GM12878 (cell line): ENCODE measurements at regions of chr4 and their contacts with region 1.

Region 1: GRCh38 chr4:40897557-40898203 is 147.9 kb downstream of the NSUN7 start:
- DNase-seq: no peak
- ATAC-seq: peak; percentile 95
- H3K4me3 ChIP-seq: 0 out of 2 replicates have a peak overlapping the region, but pooled peaks have one; percentile 34
- H3K27ac ChIP-seq: no peak overlapping the region
- H3K4me1 ChIP-seq: no peaks in the 10 kb centered on the region
- H3K27me3 ChIP-seq: no peaks in the 10 kb centered on the region
- CTCF ChIP-seq: peak; percentile 74 to 89 (median 82)
- EP300 ChIP-seq: no peak
- POLR2A ChIP-seq: no peak
- RAD21 ChIP-seq: peak; percentile 68

Region 2: DNA sequence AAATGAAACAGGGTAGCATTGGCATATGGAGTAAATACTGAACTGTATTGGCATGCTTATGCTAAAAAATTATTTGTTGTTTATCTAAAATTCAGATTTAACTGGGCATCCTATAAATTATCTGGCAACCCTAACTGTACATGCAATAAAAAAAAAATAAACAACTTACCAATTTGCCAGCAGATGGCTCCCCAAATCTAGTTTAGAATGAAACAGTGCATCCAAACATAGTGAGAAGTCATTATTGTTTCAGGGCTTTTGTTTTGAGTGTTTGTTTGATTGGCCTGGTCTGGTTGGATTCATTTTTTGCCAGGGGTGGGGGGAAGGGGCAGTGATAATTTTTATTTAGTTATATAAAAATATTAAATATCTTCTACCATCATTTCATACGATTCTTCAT is 160.8 kb before region 1 on chr4:
- CTCF ChIA-PET with region 1: interaction called, 140 read pairs
- POLR2A ChIA-PET with region 1: interaction called, 3 read pairs
- RAD21 ChIA-PET with region 1: interaction called, 9 read pairs
- SMC1A ChIA-PET with region 1: interaction called, 38 read pairs
- in situ Hi-C with region 1: loop called (anchors 5 kb)
- intact Hi-C with region 1: loop called (anchors 1 kb)
- DNase-seq: no peak
- ATAC-seq: peak; percentile 84
- H3K4me3 ChIP-seq: no peak overlapping the region
- H3K27ac ChIP-seq: no peak overlapping the region
- H3K4me1 ChIP-seq: no peaks in the 10 kb centered on the region
- H3K27me3 ChIP-seq: no peaks in the 10 kb centered on the region
- CTCF ChIP-seq: peak; percentile 43 to 68 (median 47); a peak in 5 of 6 replicates
- EP300 ChIP-seq: no peak
- POLR2A ChIP-seq: no peak
- RAD21 ChIP-seq: peak; percentile 94

Region 3: GRCh38 chr4:40881096-40881495 is 16.6 kb before region 1 on chr4:
- CTCF ChIA-PET with region 1: interaction called, 23 read pairs
- POLR2A ChIA-PET with region 1: no interaction called
- RAD21 ChIA-PET with region 1: interaction called, 8 read pairs
- SMC1A ChIA-PET with region 1: interaction called, 4 read pairs
- in situ Hi-C with region 1: no loop called
- intact Hi-C with region 1: no loop called
- DNase-seq: no peak
- ATAC-seq: no peak
- H3K4me3 ChIP-seq: no peak overlapping the region
- H3K27ac ChIP-seq: no peak overlapping the region
- H3K4me1 ChIP-seq: no peaks in the 10 kb centered on the region
- H3K27me3 ChIP-seq: no peaks in the 10 kb centered on the region
- CTCF ChIP-seq: no peak
- EP300 ChIP-seq: no peak
- POLR2A ChIP-seq: no peak
- RAD21 ChIP-seq: no peak

Region 4: DNA sequence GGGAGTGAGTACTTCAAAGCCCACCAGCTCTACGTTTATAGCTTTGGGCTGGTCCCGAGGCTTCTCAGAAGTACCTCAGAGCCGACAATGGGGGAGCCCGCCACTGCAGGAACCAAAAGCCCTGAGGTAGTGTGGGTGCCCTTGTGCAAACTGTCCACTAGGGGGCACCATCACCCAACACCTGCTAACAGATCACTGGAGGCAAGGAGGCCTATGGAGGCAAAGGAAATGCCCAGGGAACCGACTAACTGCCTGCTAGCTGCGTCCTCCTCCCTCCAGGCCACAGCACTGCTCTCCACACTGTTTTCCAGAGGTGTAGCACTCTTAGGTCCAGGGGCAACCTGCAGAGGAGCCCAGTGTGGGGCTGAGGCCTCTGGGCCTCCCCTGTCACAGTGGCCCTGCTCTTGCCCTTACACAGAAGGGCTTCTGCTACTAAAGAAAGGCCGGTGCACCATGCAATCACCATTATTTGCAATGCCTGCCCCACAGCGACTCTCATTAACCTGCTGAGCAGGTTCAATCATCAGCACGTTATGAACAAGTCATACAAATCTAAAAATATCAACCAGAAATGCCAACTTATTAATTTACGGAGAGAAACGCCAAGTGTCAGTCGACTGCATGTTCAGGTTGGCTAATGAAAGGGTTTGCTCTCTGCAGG is 11.2 kb after region 1 on chr4:
- CTCF ChIA-PET with region 1: interaction called, 39 read pairs
- POLR2A ChIA-PET with region 1: no interaction called
- RAD21 ChIA-PET with region 1: interaction called, 3 read pairs
- SMC1A ChIA-PET with region 1: interaction called, 5 read pairs
- in situ Hi-C with region 1: no loop called
- intact Hi-C with region 1: no loop called
- DNase-seq: peak; percentile 40
- ATAC-seq: peak; percentile 99
- H3K4me3 ChIP-seq: no peak overlapping the region
- H3K27ac ChIP-seq: no peak overlapping the region
- H3K4me1 ChIP-seq: peaks cover 4% of the 10 kb centered on the region; the same call in 1 of the 2 replicates
- H3K27me3 ChIP-seq: no peaks in the 10 kb centered on the region
- CTCF ChIP-seq: peak; percentile 92 to 97 (median 93)
- EP300 ChIP-seq: no peak
- POLR2A ChIP-seq: no peak
- RAD21 ChIP-seq: peak; percentile 82

Region 5: GRCh38 chr4:41024556-41025491 is 127.1 kb after region 1 on chr4:
- CTCF ChIA-PET with region 1: no interaction called
- POLR2A ChIA-PET with region 1: no interaction called
- RAD21 ChIA-PET with region 1: no interaction called
- SMC1A ChIA-PET with region 1: no interaction called
- in situ Hi-C with region 1: no loop called
- intact Hi-C with region 1: no loop called
- DNase-seq: no peak
- ATAC-seq: no peak
- H3K4me3 ChIP-seq: no peak overlapping the region
- H3K27ac ChIP-seq: no peak overlapping the region
- H3K4me1 ChIP-seq: no peaks in the 10 kb centered on the region
- H3K27me3 ChIP-seq: no peaks in the 10 kb centered on the region
- CTCF ChIP-seq: no peak
- EP300 ChIP-seq: no peak
- POLR2A ChIP-seq: no peak
- RAD21 ChIP-seq: no peak

Region 6: DNA sequence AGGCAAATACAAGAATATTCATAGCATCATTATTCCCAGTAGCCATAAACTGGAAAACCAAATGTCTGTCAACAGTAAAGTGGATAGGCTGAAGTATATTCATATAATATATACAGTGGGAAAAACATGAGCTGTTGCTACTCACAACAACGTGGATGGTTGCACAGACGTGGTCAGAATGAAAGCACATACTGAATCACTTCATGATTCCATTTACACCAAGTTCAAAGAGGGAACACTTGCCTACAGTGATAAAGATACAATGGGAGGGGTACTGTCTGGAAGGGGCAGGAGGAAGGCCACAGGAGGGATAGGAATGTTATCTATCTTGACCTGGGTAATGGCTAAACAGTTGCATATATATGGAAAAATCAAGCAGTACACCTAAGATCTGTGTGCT is 291.4 kb after region 1 on chr4:
- CTCF ChIA-PET with region 1: no interaction called
- POLR2A ChIA-PET with region 1: no interaction called
- RAD21 ChIA-PET with region 1: no interaction called
- SMC1A ChIA-PET with region 1: no interaction called
- in situ Hi-C with region 1: no loop called
- intact Hi-C with region 1: no loop called
- DNase-seq: peak; percentile 40
- ATAC-seq: peak; percentile 78
- H3K4me3 ChIP-seq: 0 out of 2 replicates have a peak overlapping the region, but pooled peaks have one; percentile 17
- H3K27ac ChIP-seq: peak overlapping the region; percentile 27
- H3K4me1 ChIP-seq: peaks cover 26% of the 10 kb centered on the region
- H3K27me3 ChIP-seq: no peaks in the 10 kb centered on the region
- CTCF ChIP-seq: no peak
- EP300 ChIP-seq: peak in 1 of 2 experiments; percentile 68; a peak in 1 of 4 replicates
- POLR2A ChIP-seq: no peak
- RAD21 ChIP-seq: no peak